Endothelial cell of umbilical vein (primary cell): ENCODE measurements at regions of chr7 and their contacts with region 1.

Region 1: GRCh38 chr7:50793115-50793946 is 10.6 kb upstream of the GRB10 start:
- DNase-seq: peak; percentile 50
- H3K4me3 ChIP-seq: peak overlapping the region; percentile 40 to 91 (median 52)
- H3K27ac ChIP-seq: peak overlapping the region; percentile 77
- H3K4me1 ChIP-seq: peaks cover 24% of the 10 kb centered on the region
- H3K27me3 ChIP-seq: no peaks in the 10 kb centered on the region
- CTCF ChIP-seq: no peak
- POLR2A ChIP-seq: peak; percentile 73

Region 2: DNA sequence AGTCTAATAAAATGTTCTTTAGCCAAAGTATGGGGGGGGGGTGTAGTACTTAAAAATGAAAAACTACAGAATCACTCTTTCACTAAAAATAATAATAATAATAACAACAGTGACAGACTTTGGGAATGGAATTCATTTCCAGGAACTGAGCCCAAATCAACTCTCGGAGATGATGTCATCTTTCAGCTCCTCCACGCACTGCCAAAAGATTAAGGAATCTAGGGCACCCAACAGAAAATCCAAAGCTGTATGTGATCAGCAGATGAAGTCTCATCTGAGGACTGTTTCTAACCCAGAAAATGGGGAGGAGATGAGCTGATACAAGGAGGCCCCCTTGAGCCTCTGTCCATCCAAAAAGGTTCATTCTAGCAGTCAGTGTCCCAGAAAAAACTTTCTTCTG is 65.1 kb before region 1 on chr7:
- CTCF ChIA-PET with region 1: no interaction called
- POLR2A ChIA-PET with region 1: no interaction called
- dilution Hi-C with region 1: no loop called
- intact Hi-C with region 1: loop called (anchors 2 kb)
- DNase-seq: no peak
- H3K4me3 ChIP-seq: no peak overlapping the region
- H3K27ac ChIP-seq: peak overlapping the region; percentile 29
- H3K4me1 ChIP-seq: peaks cover 57% of the 10 kb centered on the region
- H3K27me3 ChIP-seq: no peaks in the 10 kb centered on the region
- CTCF ChIP-seq: no peak
- POLR2A ChIP-seq: no peak

Region 3: GRCh38 chr7:50838675-50839377 is 45.5 kb after region 1 on chr7:
- CTCF ChIA-PET with region 1: no interaction called
- POLR2A ChIA-PET with region 1: no interaction called
- dilution Hi-C with region 1: no loop called
- intact Hi-C with region 1: loop called (anchors 1 kb)
- DNase-seq: peak; percentile 31
- H3K4me3 ChIP-seq: no peak overlapping the region
- H3K27ac ChIP-seq: peak overlapping the region; percentile 92
- H3K4me1 ChIP-seq: peaks cover 23% of the 10 kb centered on the region
- H3K27me3 ChIP-seq: no peaks in the 10 kb centered on the region
- CTCF ChIP-seq: no peak
- POLR2A ChIP-seq: no peak

Region 4: GRCh38 chr7:50962962-50963374 is 169.6 kb after region 1 on chr7:
- CTCF ChIA-PET with region 1: no interaction called
- POLR2A ChIA-PET with region 1: no interaction called
- dilution Hi-C with region 1: no loop called
- intact Hi-C with region 1: loop called (anchors 2 kb)
- DNase-seq: peak; percentile 93
- H3K4me3 ChIP-seq: no peak overlapping the region
- H3K27ac ChIP-seq: peak overlapping the region; percentile 14
- H3K4me1 ChIP-seq: peaks cover 29% of the 10 kb centered on the region
- H3K27me3 ChIP-seq: no peaks in the 10 kb centered on the region
- CTCF ChIP-seq: no peak
- POLR2A ChIP-seq: no peak

Region 5: DNA sequence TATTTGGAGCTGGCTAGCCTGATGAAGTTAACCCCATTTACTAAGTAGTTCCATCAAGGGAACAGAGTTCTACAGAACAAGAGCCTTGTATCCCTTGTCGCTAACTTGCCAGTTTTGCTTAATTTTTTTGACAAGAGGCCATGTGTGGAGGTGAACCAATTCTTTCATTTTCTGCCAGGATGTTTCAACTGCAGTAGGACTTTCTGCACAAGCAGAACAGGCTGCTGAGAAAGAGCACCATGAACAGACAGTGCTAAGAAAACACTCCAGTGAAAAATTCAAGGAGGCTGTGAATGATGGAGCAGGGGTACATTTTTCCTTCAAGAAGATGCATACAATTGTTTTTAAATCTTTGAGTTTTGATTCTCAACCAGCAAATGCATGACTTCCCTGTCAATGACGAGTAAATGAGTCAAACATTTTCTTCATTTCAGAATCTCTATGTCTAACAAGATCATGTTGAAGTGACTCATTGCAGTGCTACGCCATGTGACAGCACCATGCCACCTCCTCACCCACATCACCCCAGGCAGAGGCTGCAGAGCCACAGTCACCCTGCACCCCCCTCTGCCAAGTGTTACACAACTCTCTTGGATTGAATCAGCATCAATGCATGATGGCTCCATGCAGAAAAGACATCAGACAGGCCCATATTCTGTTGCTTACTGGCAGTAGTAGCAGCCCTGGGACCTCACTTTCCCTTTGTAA is 330.1 kb after region 1 on chr7:
- CTCF ChIA-PET with region 1: no interaction called
- POLR2A ChIA-PET with region 1: no interaction called
- dilution Hi-C with region 1: no loop called
- intact Hi-C with region 1: loop called (anchors 5 kb)
- DNase-seq: no peak
- H3K4me3 ChIP-seq: no peak overlapping the region
- H3K27ac ChIP-seq: no peak overlapping the region
- H3K4me1 ChIP-seq: peaks cover 12% of the 10 kb centered on the region
- H3K27me3 ChIP-seq: peaks cover 0 to 1% of the 10 kb centered on the region in 2 experiments
- CTCF ChIP-seq: no peak
- POLR2A ChIP-seq: no peak